Activated naive CD4-positive, alpha-beta T cell treated with anti-CD3 and anti-CD28 coated beads for 36 hours (primary cell): ENCODE measurements at regions of chr19 and their contacts with region 1.

Region 1: DNA sequence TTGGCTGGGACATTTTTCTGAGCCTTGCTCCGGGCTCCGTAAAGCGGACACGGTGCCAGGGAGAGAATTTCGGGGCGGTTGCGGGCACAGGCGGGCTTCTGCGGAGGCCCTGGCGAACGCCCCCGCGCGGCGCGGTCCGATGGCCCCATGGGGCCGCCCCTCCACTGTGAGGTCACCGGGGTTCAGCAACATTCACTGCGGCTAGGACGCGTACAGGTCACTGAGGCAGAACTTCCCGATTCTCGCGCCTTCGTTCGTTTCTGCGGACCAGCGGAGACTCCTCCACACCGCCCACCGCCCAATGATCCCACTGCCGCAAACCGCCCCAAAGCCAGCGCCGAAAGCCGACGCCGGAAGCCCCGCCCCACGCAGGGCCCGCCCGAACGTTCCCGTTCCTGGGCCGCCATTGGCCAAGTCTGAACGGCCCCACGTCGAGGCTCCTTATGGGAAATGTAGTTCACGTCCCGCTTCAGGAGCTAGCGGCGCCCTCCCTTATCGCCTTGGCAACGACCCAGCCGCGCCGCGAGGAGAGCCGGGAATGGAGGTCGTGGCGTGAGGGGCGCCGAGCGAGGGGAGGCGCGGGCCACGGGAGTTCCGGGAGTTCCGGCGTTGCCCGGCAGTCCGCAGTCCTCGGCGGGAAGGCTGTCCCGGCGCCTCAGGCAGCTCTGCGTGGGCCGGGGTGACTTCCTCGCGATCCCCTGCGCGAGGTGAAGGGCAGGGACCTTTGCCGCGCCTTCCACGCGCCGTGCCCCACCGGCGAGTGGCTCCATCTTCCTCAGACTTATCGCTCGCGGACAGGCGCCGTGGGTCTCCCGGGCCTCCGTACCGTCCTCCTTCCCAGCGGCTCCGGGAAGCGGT is at the start of gene ZNF584:
- DNase-seq: peak; percentile 97
- H3K4me3 Mint-ChIP-seq: peak within 1 kb of the TSS; percentile 89
- H3K27ac Mint-ChIP-seq: peak within 1 kb of the TSS; percentile 93
- H3K4me1 Mint-ChIP-seq: peaks cover 30% of the 10 kb centered on the region
- H3K27me3 Mint-ChIP-seq: no peaks in the 10 kb centered on the region
- total RNA-seq, gene ZNF584: 3.4 to 4.8 TPM

Region 2: GRCh38 chr19:58305065-58305931 is 103.1 kb before region 1 on chr19 and contains the start of gene ERVK3-1:
- CTCF ChIA-PET with region 1: no interaction called
- intact Hi-C with region 1: loop called (anchors 1 kb)
- DNase-seq: peak; percentile 95
- H3K4me3 Mint-ChIP-seq: peak within 1 kb of the TSS; percentile 100
- H3K27ac Mint-ChIP-seq: peak within 1 kb of the TSS; percentile 99
- H3K4me1 Mint-ChIP-seq: peaks cover 46% of the 10 kb centered on the region
- H3K27me3 Mint-ChIP-seq: no peaks in the 10 kb centered on the region
- total RNA-seq, gene ERVK3-1: 24.5 to 27.7 TPM

Region 3: GRCh38 chr19:58362272-58362994 is 45.9 kb before region 1 on chr19 and contains the start of gene ZNF497:
- CTCF ChIA-PET with region 1: no interaction called
- intact Hi-C with region 1: loop called (anchors 2 kb)
- DNase-seq: peak; percentile 97
- H3K4me3 Mint-ChIP-seq: peak within 1 kb of the TSS; percentile 93
- H3K27ac Mint-ChIP-seq: peak within 1 kb of the TSS; percentile 87
- H3K4me1 Mint-ChIP-seq: peaks cover 8% of the 10 kb centered on the region
- H3K27me3 Mint-ChIP-seq: no peaks in the 10 kb centered on the region
- total RNA-seq, gene ZNF497: 0.40 to 0.41 TPM

Region 4: DNA sequence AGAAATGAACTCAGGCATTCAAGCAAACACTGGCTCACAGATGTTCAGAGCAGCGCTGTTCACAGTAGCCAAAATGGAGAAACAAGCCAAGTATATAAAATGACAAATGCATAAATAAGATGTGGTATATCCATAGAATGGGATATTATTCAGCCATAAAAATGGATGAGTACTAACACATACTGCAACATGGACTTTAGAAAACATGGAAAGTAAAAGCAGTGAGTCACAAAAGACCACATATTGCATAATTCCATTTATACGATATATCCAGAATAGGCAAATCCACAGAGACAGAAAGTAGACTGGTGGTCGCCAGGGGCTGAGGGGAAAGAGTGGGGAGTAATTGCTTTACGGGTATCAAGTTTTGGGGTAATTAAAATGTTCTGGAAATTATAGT is 34.2 kb before region 1 on chr19:
- CTCF ChIA-PET with region 1: no interaction called
- intact Hi-C with region 1: no loop called
- DNase-seq: no peak
- H3K4me3 Mint-ChIP-seq: no peak overlapping the region
- H3K27ac Mint-ChIP-seq: no peak overlapping the region
- H3K4me1 Mint-ChIP-seq: peaks cover 2% of the 10 kb centered on the region
- H3K27me3 Mint-ChIP-seq: no peaks in the 10 kb centered on the region

Region 5: GRCh38 chr19:58386576-58387337 is 21.6 kb before region 1 on chr19 and contains the start of gene RPS5:
- CTCF ChIA-PET with region 1: no interaction called
- intact Hi-C with region 1: loop called (anchors 1 kb)
- DNase-seq: peak; percentile 97
- H3K4me3 Mint-ChIP-seq: peak within 1 kb of the TSS; percentile 91
- H3K27ac Mint-ChIP-seq: peak within 1 kb of the TSS; percentile 96
- H3K4me1 Mint-ChIP-seq: peaks cover 35% of the 10 kb centered on the region
- H3K27me3 Mint-ChIP-seq: no peaks in the 10 kb centered on the region
- total RNA-seq, gene RPS5: 1,806 to 1,853 TPM

Region 6: DNA sequence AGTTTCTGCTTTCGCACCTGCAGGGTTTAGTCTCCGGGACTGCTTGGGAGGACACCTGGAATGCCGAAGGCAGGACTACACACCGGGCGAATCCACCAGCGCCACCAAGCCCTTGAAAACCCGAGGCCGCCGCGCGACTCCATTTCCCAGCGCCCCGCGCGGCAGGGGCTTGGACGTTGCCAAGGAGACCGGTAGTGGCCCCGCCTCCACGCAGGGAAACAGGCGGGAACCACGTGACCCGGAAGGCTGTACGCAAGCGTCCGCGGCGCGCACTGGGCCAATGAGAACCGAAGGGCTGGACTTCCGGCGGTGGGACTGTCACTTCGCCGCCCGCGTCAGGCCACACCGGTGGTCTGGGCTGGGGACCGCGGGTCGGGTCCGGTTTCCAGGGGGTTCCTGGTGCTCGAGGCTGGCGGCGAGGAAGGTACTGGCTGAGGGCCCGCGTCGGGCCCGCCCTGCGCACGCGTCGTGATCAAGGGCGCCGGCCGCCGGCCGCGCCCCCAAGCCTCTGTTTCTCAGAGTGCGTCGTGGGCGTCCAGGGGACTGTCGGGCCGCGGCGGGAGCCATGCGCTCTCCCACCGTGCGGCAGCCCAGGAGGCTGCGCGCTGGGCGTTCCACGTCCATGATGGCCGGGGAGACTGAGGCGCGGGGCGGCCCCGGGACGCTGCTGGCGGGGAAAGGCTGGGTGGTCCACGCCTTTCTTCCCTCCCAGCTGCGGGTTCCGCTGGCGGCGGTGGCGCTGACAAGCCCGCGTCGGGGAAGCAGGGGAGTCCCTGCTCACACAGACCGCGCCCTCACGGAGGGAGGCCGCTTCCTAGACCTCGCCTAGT is 58.6 kb after region 1 on chr19 and contains the start of gene ZNF324:
- CTCF ChIA-PET with region 1: no interaction called
- intact Hi-C with region 1: loop called (anchors 2 kb)
- DNase-seq: peak; percentile 99
- H3K4me3 Mint-ChIP-seq: peak within 1 kb of the TSS; percentile 83
- H3K27ac Mint-ChIP-seq: no peak within 1 kb of the TSS
- H3K4me1 Mint-ChIP-seq: peaks cover 20% of the 10 kb centered on the region
- H3K27me3 Mint-ChIP-seq: peaks cover 2% of the 10 kb centered on the region
- total RNA-seq, gene ZNF324: 2.4 to 3.0 TPM

Region 7: GRCh38 chr19:58513694-58514563 is 105.5 kb after region 1 on chr19:
- CTCF ChIA-PET with region 1: no interaction called
- intact Hi-C with region 1: loop called (anchors 1 kb)
- DNase-seq: peak; percentile 96
- H3K4me3 Mint-ChIP-seq: peak overlapping the region; percentile 88
- H3K27ac Mint-ChIP-seq: peak overlapping the region; percentile 83
- H3K4me1 Mint-ChIP-seq: peaks cover 36% of the 10 kb centered on the region
- H3K27me3 Mint-ChIP-seq: no peaks in the 10 kb centered on the region